ENCODE measurements at regions of chr9 and their contacts with region 1.

Region 1: DNA sequence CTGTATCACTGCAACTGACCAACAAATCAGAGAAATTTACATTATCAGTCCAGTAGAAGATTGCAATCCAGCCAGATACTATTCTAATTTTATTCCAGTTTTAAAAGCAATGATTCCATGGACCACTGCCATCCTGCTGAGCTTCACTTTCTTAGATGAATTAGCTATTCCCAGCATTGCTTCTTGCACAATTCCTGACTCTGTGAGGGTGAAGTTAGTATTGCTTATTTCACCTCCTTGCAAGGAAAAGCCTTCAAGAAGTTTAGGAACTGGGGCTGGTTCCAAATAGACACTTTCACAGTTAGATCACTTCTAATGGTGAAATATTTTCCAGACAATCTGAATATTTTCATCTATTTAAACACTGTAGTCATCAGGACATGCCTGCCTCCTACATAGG is 338.6 kb upstream of the TNC start:
- DNase-seq: no peak
- H3K4me3 ChIP-seq: no peak overlapping the region
- H3K27ac ChIP-seq: no peak overlapping the region
- H3K4me1 ChIP-seq: no peaks in the 10 kb centered on the region
- H3K27me3 ChIP-seq: no peaks in the 10 kb centered on the region
- CTCF ChIP-seq: no peak

Region 2: DNA sequence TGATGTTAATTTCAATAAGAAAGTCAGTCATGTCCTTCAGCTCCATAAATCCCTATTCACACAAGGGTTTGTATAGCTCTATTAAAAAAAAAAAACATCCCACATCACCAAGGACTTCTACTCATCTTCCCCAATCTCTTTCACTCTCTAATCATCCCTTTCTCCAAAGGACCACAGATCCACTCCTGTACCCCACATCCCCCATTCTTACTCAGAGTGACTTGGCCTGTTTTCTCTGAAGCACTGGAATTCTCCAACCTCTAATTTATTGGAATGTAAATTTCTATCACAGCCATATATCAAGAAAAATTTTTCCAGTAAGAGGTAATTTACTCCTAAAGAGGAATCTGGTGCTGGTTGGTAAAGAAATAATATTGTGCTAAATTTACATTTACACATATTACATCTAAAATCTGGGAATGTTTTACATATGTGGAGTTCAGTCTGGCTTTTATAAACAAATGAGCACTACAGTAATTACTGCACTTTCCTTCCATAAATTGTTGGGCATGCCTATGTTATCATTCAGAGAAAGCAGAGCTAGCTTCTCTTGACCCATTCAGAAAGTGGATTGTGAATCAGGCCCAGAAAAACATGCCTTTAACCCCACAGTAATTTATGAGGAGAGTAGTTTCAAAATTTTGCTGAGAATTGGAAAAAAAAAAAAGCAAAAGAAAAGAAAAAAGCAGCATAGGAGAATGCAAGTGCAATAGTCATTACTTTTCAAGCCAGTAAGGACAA is 61.0 kb after region 1 on chr9:
- intact Hi-C with region 1: loop called (anchors 10 kb)
- DNase-seq: no peak
- H3K4me3 ChIP-seq: no peak overlapping the region
- H3K27ac ChIP-seq: no peak overlapping the region
- H3K4me1 ChIP-seq: no peaks in the 10 kb centered on the region
- H3K27me3 ChIP-seq: peaks cover 12% of the 10 kb centered on the region
- CTCF ChIP-seq: no peak

Region 3: DNA sequence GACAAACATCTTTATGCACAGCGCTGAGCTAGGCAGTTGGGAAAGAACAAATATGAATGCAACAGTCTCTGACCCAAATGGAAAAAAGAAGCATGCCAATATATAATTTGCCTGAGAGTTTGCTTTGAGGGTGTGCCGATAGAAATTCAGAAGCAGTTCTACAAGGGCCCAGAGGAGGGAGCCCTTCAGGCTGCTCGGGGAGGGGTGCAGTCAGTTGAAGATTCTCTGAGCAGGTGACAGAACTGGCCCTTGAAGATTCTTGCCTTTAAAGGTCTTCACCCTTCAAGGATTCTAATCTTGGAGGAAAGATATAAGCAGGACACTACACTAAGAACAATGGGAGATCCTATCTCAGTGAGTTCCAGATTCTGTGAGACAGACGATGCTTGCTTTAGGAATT is 693.3 kb after region 1 on chr9:
- intact Hi-C with region 1: no loop called
- DNase-seq: no peak
- H3K4me3 ChIP-seq: no peak overlapping the region
- H3K27ac ChIP-seq: no peak overlapping the region
- H3K4me1 ChIP-seq: peaks cover 9% of the 10 kb centered on the region
- H3K27me3 ChIP-seq: peaks cover 15% of the 10 kb centered on the region
- CTCF ChIP-seq: peak; percentile 79